ENCODE measurements at regions of chr11 and their contacts with region 1.

Region 1: DNA sequence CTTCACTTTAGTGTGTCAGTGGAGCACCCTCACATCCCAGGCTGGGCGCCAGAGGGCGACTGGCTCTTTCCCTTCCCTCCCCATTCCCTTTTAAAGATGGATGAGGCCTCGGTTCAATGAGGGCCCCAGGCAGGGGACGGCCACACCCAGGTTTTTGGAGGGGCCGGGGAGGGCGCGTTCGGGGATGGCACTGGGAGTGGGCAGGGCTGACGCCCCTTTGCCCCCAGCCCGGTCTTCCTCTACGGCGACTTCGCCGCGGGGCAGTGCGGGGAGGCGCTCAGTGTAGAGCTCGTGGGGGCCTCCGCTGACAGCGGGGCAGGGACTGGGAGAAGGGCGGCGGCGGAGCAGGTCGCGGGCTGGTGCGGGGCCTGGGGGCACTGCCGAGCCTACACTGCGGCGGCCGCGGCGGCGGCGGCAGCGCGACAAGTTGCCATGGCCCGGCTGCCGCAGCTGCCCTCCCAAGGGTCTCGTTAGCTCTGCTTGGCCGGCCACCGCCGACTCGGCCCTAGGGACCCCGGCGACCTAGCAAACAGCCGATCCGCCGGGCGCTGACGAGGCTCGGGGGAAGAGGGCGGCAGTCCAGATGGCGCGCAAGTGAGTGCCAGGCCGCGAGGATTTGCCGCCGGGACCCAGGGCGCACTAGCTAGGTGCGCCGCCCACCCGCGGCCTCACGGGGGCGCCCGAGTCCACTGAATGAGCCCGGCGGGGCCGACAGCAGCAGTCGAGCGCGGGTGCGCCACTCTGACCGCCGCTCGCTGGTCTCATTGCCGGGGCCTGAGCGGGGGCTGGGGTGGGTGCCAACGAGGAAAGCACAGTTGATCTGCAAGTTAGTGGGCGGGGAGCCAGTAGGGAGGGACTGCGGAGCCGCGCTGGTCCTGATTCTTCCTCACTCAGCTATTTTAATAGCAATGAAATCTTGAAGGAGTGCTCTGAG is 92.7 kb downstream of the RRM1 start:
- DNase-seq: peak; percentile 95 to 96
- H3K4me3 ChIP-seq: peak overlapping the region; percentile 27 to 58
- H3K27ac ChIP-seq: peak overlapping the region; percentile 66 to 75
- H3K4me1 ChIP-seq: peaks cover 0 to 3% of the 10 kb centered on the region in 2 donors
- H3K27me3 ChIP-seq: no peaks in the 10 kb centered on the region
- CTCF ChIP-seq: peak; percentile 94 to 97 (median 94)
- POLR2A ChIP-seq: no peak

Region 2: DNA sequence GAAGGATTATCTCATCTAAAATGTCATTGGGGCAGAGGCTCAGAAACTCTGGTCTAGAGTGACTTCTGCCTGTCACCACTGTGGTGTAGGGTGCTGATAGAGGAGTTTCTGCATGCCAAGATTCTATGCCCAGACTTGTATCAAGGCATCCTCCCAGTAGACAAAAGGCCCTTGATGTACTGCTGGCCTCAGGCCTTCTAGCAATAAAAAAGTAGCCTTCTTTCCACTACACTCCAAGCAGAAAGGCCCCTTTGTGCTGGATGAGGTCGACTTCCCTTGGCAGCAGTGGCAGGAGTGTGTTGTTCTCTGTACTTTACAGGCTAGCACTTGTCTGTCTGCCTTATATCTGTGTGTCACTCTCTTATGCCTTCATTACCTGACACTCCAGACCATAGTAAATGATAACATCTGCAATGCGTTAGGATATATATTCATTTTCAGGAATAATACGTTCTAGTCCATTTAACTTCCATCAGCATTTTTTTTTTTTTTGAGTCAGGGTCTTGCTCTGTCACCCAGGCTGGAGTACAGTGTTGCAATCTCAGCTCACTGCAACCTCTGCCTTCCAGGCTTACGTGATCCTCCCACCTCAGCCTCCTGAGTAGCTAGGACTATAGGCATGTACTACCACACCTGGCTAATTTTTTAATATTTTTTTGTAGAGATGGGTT is 142.2 kb before region 1 on chr11:
- intact Hi-C with region 1: no loop called
- DNase-seq: no peak
- H3K4me3 ChIP-seq: no peak overlapping the region
- H3K27ac ChIP-seq: no peak overlapping the region
- H3K4me1 ChIP-seq: no peaks in the 10 kb centered on the region
- H3K27me3 ChIP-seq: no peaks in the 10 kb centered on the region
- CTCF ChIP-seq: no peak
- POLR2A ChIP-seq: no peak

Region 3: DNA sequence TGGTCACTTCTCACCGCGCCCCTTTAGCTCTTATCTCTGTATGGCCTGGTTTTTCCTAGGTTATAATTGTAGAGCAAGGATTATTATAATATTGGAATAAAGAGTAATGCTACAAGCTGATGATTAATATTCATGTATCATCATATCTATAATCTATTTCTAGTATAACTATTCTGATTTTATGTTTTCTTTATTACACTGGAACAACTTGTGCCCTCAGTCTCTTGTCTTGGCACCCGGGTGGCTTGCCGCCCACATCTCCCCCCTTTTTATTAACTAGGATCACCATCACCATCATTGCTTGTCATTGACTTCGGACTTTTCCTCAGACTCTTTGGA is 306.1 kb after region 1 on chr11:
- intact Hi-C with region 1: loop called (anchors 5 kb)
- DNase-seq: no peak
- H3K4me3 ChIP-seq: no peak overlapping the region
- H3K27ac ChIP-seq: no peak overlapping the region
- H3K4me1 ChIP-seq: no peaks in the 10 kb centered on the region
- H3K27me3 ChIP-seq: no peaks in the 10 kb centered on the region
- CTCF ChIP-seq: no peak
- POLR2A ChIP-seq: no peak

Measured in uterus (tissue), 4 donors.